ENCODE measurements at regions of chr20 and their contacts with region 1.

Region 1: GRCh38 chr20:1965520-1966351 is 28.1 kb downstream of the PDYN start:
- DNase-seq: peak; percentile 87
- ATAC-seq: peak; percentile 88
- H3K4me3 ChIP-seq: peak overlapping the region; percentile 9 to 57 (median 42)
- H3K4me3 Mint-ChIP-seq: peak overlapping the region; percentile 50
- H3K27ac ChIP-seq: no peak overlapping the region
- H3K27ac Mint-ChIP-seq: no peak overlapping the region
- H3K4me1 ChIP-seq: peaks cover 16 to 18% of the 10 kb centered on the region in 2 donors
- H3K4me1 Mint-ChIP-seq: peaks cover 18% of the 10 kb centered on the region
- H3K27me3 ChIP-seq: no peaks in the 10 kb centered on the region
- H3K27me3 Mint-ChIP-seq: peaks cover 2% of the 10 kb centered on the region
- CTCF ChIP-seq: peak; percentile 93

Region 2: DNA sequence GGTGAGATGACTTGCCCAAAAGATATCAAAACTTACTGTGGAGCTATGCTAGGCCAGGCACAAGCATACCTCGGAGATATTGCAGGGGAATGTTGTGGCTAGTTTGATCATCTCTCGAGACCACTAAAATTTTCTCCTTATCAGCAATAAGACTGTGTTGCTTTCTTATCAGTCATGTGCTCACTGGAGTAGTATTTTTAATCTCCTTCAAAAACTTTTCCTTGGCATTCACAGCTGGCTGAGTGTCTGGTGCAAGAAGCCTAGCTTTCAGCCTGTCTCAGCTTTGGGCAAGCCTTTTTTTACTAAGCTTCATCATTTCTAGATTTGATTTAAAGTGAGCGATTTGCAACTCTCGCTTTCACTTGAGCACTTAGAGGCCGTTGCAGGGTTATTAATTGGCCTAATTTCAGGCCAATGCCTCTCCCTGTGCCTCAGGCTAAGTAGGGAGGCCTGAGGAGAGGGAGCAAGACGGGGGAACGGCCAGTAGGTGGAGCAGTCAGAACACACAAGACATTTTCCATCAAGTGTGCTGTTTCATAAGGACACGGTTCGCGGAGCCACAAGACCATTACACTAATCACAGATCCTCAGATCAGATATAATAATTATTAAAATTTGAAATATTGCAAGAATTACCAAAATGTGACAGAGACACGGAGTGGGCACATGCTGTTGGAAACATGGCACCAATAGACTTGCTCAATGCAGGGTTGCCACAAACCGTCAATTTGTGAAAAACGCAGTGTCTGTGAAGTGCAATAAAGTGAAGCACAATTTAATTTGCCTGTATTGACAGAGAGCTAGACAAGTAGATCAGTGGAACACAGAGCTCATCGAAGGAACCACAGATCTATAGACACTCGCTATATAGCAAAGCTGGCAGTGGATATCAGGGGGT is 201.4 kb before region 1 on chr20:
- CTCF ChIA-PET with region 1: interaction called, 11 read pairs
- POLR2A ChIA-PET with region 1: no interaction called
- intact Hi-C with region 1: no loop called
- DNase-seq: peak; percentile 77
- ATAC-seq: peak; percentile 79
- H3K4me3 ChIP-seq: no peak overlapping the region
- H3K4me3 Mint-ChIP-seq: no peak overlapping the region
- H3K27ac ChIP-seq: no peak overlapping the region
- H3K27ac Mint-ChIP-seq: no peak overlapping the region
- H3K4me1 ChIP-seq: no peaks in the 10 kb centered on the region
- H3K4me1 Mint-ChIP-seq: peaks cover 1% of the 10 kb centered on the region
- H3K27me3 ChIP-seq: peaks cover 0 to 3% (median 0%) of the 10 kb centered on the region in 4 experiments
- H3K27me3 Mint-ChIP-seq: peaks cover 13% of the 10 kb centered on the region
- CTCF ChIP-seq: peak; percentile 87

Region 3: DNA sequence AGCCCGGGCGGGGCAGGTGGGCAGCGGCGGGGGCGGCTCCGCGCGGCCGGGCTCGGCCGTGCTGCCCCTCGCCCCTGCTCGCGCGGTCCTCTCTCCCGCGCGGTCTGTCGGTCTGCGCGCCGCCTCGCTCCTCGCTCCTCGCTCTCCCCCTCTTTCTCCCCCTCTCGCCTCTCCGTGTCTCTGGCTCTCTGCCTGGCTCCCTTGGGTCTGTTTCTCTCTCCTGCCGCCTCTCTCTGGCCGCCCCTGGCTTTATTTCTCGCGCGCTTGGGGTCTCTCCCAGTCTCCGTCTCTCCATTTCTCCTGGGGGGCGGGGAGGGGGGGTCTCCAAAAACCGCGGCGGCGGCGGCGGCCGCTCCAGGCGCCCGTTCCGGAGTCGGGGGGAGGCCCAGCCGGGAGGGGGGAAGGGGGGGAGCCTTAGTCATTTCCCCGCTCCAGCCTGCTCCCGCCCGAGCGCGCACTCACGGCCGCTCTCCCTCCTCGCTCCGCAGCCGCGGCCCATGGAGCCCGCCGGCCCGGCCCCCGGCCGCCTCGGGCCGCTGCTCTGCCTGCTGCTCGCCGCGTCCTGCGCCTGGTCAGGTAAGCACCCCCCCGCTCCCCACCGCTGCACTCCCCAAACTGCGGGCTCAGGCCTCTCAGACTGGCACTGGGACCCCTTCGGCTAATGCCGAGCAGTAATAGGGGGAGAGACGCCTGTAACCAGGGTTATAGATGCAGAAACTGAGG is 70.6 kb before region 1 on chr20 and contains the start of gene SIRPA:
- CTCF ChIA-PET with region 1: interaction called, 10 read pairs
- POLR2A ChIA-PET with region 1: no interaction called
- intact Hi-C with region 1: loop called (anchors 5 kb)
- DNase-seq: peak; percentile 54
- ATAC-seq: peak; percentile 3
- H3K4me3 ChIP-seq: peak within 1 kb of the TSS; percentile 42 to 78 (median 60)
- H3K4me3 Mint-ChIP-seq: peak within 1 kb of the TSS; percentile 90
- H3K27ac ChIP-seq: no peak within 1 kb of the TSS
- H3K27ac Mint-ChIP-seq: peak within 1 kb of the TSS; percentile 82
- H3K4me1 ChIP-seq: peaks cover 41 to 50% of the 10 kb centered on the region in 2 donors
- H3K4me1 Mint-ChIP-seq: peaks cover 52% of the 10 kb centered on the region
- H3K27me3 ChIP-seq: peaks cover 0 to 10% (median 3%) of the 10 kb centered on the region in 4 experiments
- H3K27me3 Mint-ChIP-seq: peaks cover 6% of the 10 kb centered on the region
- CTCF ChIP-seq: no peak
- total RNA-seq, gene SIRPA: 10.2 TPM in 2 replicates

Region 4: GRCh38 chr20:1900321-1900801 is 65.4 kb before region 1 on chr20:
- CTCF ChIA-PET with region 1: interaction called, 10 read pairs
- POLR2A ChIA-PET with region 1: no interaction called
- intact Hi-C with region 1: loop called (anchors 5 kb)
- DNase-seq: peak; percentile 52
- ATAC-seq: peak; percentile 22
- H3K4me3 ChIP-seq: no peak overlapping the region
- H3K4me3 Mint-ChIP-seq: no peak overlapping the region
- H3K27ac ChIP-seq: no peak overlapping the region
- H3K27ac Mint-ChIP-seq: no peak overlapping the region
- H3K4me1 ChIP-seq: peaks cover 33 to 37% of the 10 kb centered on the region in 2 donors
- H3K4me1 Mint-ChIP-seq: peaks cover 45% of the 10 kb centered on the region
- H3K27me3 ChIP-seq: no peaks in the 10 kb centered on the region
- H3K27me3 Mint-ChIP-seq: no peaks in the 10 kb centered on the region
- CTCF ChIP-seq: peak; percentile 37

Region 5: DNA sequence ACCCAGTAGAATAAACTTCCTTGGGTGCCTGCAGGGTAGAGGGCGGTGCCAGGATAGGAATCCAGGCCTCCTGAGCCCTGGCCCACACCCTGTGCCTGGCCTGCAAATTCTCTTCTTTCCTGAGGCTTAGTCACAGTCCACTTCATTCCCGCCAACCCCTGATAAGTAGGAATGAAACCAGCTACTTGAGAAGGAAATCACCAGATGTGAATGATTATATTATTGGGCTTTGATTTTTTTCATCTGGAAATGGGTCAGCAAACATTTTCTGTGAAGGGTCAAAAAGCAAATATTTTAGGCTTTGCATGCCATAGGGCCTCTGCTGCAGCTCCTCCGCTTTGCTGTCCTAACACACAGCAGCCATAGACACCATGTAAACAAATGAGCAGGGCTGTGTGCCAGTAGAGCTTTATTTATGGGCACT is 186.1 kb after region 1 on chr20:
- CTCF ChIA-PET with region 1: no interaction called
- POLR2A ChIA-PET with region 1: no interaction called
- intact Hi-C with region 1: no loop called
- DNase-seq: no peak
- ATAC-seq: no peak
- H3K4me3 ChIP-seq: no peak overlapping the region
- H3K4me3 Mint-ChIP-seq: no peak overlapping the region
- H3K27ac ChIP-seq: no peak overlapping the region
- H3K27ac Mint-ChIP-seq: no peak overlapping the region
- H3K4me1 ChIP-seq: no peaks in the 10 kb centered on the region
- H3K4me1 Mint-ChIP-seq: no peaks in the 10 kb centered on the region
- H3K27me3 ChIP-seq: no peaks in the 10 kb centered on the region
- H3K27me3 Mint-ChIP-seq: no peaks in the 10 kb centered on the region
- CTCF ChIP-seq: no peak

Region 6: DNA sequence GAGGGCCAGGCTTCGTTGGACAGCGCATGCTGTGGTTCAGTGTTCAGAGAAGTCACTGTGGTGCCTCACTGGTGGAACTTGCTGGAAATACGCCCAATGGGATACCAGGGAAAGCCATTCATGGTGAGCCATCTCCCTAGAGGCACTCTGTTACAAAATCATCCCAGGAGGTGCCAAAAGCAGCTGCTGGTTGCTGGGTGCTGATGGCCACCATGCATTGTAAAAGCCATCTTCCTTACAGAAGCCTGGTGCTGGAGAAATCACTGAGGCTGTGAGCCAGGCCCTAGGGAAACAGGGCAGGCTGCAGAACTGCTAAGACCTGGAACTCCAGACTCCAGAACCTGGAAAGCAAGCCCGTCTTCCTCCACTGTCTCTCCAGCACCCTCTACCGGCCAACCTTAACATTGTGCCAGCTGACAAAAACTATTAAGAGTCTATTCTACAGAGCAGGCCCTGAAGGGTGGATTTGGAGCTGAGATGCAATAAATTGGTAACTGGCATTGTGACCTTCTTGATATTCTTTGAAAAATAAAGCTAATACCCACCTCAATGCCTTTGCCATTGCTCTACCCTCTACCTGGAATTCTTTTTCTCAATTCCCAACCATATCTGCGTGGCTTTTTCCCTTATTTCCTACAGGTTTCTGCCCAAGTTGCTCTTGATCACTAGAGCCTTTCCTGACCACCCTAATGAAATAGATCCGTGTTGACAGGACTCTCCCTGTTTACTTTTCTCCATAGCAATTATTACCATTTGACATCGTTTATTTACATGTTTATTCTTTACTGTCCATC is 486.4 kb after region 1 on chr20:
- CTCF ChIA-PET with region 1: interaction called, 5 read pairs
- POLR2A ChIA-PET with region 1: no interaction called
- intact Hi-C with region 1: loop called (anchors 2 kb)
- DNase-seq: peak; percentile 63
- ATAC-seq: peak; percentile 53
- H3K4me3 ChIP-seq: no peak overlapping the region
- H3K4me3 Mint-ChIP-seq: no peak overlapping the region
- H3K27ac ChIP-seq: no peak overlapping the region
- H3K27ac Mint-ChIP-seq: no peak overlapping the region
- H3K4me1 ChIP-seq: no peaks in the 10 kb centered on the region
- H3K4me1 Mint-ChIP-seq: no peaks in the 10 kb centered on the region
- H3K27me3 ChIP-seq: no peaks in the 10 kb centered on the region
- H3K27me3 Mint-ChIP-seq: no peaks in the 10 kb centered on the region
- CTCF ChIP-seq: peak; percentile 83

Measured in B cell (primary cell).